ENCODE measurements at regions of chr16 and their contacts with region 1.

Region 1: DNA sequence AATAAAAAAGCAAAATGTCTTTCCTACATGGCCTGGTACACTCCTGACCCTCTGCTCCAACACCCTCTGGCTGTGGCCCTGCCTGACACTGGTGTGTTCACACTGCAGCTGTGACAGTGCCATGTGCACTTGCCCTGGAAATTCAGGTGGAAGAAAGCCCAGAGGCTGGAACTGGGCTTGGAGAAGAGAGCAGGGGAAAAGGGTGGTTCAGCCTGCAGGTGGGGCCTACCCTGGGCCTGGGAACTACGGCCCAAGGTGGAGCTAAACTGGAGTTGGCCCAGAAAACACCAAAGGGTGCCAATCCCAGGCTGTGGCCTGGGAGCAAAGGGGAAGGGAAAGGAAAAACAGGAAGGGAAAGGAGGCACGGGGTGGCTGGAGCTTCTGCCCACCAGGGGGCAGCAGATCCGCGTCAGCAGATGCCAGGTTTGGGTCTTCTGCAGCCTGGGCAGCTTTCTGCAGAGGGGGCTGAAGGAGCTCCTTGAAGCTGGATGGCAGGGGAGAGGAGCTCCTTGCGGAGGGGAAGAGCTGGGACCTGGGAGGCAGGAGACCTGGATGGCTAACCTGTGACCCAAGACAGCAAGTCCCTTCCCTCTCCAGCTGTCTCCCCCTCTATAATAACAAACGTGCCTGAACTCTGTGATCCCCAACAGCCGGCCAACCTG is 15.4 kb upstream of the CTCF start:
- DNase-seq: peak; percentile 78 to 90
- H3K4me3 ChIP-seq: no peak overlapping the region
- H3K4me3 Mint-ChIP-seq: no peak overlapping the region
- H3K27ac Mint-ChIP-seq: peak overlapping the region; percentile 68
- H3K4me1 ChIP-seq: no peaks in the 10 kb centered on the region
- H3K4me1 Mint-ChIP-seq: peaks cover 5% of the 10 kb centered on the region
- H3K27me3 ChIP-seq: no peaks in the 10 kb centered on the region; the same call in 1 of the 2 replicates
- H3K27me3 Mint-ChIP-seq: no peaks in the 10 kb centered on the region
- CTCF ChIP-seq: peak; percentile 95 to 98

Region 2: DNA sequence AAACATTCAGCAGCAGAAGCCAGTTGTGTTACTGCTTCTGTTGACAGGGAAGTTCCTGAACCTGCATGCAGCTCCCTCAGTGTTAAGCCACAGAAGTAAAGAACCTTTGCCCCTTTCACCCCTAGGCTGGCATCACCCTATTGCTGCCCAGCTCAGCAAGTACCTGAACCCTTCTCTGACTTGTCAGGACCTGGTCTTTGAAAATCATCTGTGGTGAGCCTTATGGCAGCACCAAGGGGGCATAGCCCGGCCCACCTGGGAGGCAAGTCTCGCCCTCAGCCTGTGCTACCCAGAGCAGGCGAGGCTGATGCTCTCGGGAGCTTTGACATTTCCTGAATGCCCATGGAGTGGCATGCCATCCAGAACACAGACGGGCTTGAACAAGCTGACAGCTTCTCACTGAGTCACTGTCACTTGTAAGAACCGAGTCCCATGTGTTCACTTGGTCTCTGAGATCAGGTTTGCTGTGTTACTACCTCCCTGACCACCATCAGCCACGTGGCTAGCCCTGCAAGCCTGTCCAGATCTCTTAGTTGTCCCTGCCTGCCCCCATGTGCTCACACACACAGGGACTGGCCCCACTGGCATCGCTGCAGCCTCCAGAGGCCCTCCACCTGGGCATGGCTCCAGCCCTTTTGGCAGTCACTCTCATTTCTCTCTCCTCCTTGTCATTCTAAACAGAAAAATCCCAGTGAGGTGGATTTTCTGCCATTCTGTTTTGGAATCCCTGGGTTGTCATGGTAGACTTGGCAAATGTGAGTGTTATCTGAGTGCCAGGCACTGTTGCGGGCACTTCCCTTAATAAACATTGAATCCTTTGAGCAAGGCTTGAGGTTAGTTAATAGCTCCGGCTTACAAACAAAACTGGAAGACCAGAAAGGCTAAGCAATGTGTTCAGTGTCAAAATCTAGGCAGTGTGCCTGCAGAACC is 95.2 kb after region 1 on chr16:
- CTCF ChIA-PET with region 1: interaction called, 46 read pairs
- POLR2A ChIA-PET with region 1: no interaction called
- intact Hi-C with region 1: loop called (anchors 1 kb)
- DNase-seq: no peak
- H3K4me3 ChIP-seq: no peak overlapping the region
- H3K4me3 Mint-ChIP-seq: no peak overlapping the region
- H3K27ac Mint-ChIP-seq: no peak overlapping the region
- H3K4me1 ChIP-seq: peaks cover 4% of the 10 kb centered on the region; the same call in 1 of the 2 replicates
- H3K4me1 Mint-ChIP-seq: no peaks in the 10 kb centered on the region
- H3K27me3 ChIP-seq: no peaks in the 10 kb centered on the region
- H3K27me3 Mint-ChIP-seq: no peaks in the 10 kb centered on the region
- CTCF ChIP-seq: no peak